ENCODE measurements at regions of chr4 and their contacts with region 1.

Region 1: DNA sequence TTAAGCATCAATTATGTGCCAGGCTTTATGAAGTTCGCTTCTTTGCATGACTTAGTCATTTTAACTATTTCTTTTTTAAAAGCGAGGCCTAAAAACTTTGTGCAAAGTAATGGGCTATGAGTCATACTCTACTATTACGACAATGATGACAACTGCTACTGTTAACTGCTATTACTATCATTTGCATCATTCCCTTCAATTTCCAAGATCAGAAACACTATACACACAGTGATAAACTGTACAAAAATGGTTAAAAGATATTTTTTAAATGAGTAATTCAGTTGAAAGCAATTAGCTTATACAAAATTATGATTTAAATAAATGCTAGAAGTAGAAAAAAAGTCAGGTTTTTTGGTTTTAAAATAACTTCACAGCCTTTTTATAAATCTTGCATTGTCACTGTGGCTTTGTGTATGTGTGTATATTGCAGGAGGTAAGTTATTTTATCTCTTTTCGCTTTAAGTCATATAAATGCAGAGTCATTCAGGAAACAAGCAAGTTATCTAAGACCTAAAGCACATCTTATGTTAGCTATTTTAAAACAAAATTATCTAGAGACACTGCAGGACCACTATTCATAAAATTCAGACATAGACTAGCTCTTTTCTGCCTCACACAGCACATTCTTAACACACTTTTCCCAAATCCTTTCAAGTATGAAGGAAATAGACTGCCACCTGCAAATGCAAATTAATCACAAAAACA is 18.5 kb upstream of the CXCL3 start:
- DNase-seq: peak; percentile 87
- ATAC-seq: peak; percentile 84
- H3K4me3 ChIP-seq: no peak overlapping the region
- H3K27ac ChIP-seq: peak overlapping the region; percentile 92
- H3K4me1 ChIP-seq: peaks cover 34% of the 10 kb centered on the region
- H3K27me3 ChIP-seq: no peaks in the 10 kb centered on the region
- CTCF ChIP-seq: no peak

Region 2: GRCh38 chr4:73859614-73860088 is 197.4 kb before region 1 on chr4:
- CTCF ChIA-PET with region 1: no interaction called
- POLR2A ChIA-PET with region 1: no interaction called
- intact Hi-C with region 1: no loop called
- DNase-seq: peak; percentile 36
- ATAC-seq: peak; percentile 21; the same call in 1 of the 2 replicates
- H3K4me3 ChIP-seq: no peak overlapping the region
- H3K27ac ChIP-seq: no peak overlapping the region
- H3K4me1 ChIP-seq: peaks cover 43% of the 10 kb centered on the region
- H3K27me3 ChIP-seq: no peaks in the 10 kb centered on the region
- CTCF ChIP-seq: no peak

Region 3: GRCh38 chr4:74072739-74073138 is 15.7 kb after region 1 on chr4:
- CTCF ChIA-PET with region 1: no interaction called
- POLR2A ChIA-PET with region 1: no interaction called
- intact Hi-C with region 1: no loop called
- DNase-seq: no peak
- ATAC-seq: no peak
- H3K4me3 ChIP-seq: no peak overlapping the region
- H3K27ac ChIP-seq: no peak overlapping the region
- H3K4me1 ChIP-seq: no peaks in the 10 kb centered on the region
- H3K27me3 ChIP-seq: no peaks in the 10 kb centered on the region
- CTCF ChIP-seq: no peak

Region 4: DNA sequence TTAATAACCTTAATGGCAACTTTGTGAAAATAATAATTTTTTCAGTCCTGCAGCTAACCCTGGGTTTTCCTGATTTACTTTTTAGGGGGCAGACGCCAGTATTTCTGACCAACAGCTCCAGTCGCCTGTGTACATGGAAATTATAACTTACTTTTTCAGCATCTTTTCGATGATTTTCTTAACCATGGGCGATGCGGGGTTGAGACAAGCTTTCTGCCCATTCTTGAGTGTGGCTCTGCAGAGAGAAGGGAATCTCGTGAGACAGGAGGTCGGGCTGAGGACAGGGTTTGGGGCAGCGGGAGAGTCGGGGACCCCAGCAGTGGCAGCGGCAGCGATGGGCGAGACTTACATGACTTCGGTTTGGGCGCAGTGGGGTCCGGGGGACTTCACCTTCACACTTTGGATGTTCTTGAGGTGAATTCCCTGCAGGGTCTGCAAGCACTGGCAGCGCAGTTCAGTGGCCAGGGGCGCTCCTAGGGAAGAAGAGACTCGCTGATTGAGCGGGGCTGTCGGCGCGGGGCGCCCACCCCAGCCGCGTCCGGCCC is 41.5 kb after region 1 on chr4:
- CTCF ChIA-PET with region 1: interaction called, 3 read pairs
- POLR2A ChIA-PET with region 1: interaction called, 3 read pairs
- intact Hi-C with region 1: loop called (anchors 2 kb)
- DNase-seq: no peak
- ATAC-seq: peak; percentile 5
- H3K4me3 ChIP-seq: peak overlapping the region; percentile 78
- H3K27ac ChIP-seq: peak overlapping the region; percentile 98
- H3K4me1 ChIP-seq: peaks cover 28% of the 10 kb centered on the region
- H3K27me3 ChIP-seq: no peaks in the 10 kb centered on the region
- CTCF ChIP-seq: no peak

Region 5: DNA sequence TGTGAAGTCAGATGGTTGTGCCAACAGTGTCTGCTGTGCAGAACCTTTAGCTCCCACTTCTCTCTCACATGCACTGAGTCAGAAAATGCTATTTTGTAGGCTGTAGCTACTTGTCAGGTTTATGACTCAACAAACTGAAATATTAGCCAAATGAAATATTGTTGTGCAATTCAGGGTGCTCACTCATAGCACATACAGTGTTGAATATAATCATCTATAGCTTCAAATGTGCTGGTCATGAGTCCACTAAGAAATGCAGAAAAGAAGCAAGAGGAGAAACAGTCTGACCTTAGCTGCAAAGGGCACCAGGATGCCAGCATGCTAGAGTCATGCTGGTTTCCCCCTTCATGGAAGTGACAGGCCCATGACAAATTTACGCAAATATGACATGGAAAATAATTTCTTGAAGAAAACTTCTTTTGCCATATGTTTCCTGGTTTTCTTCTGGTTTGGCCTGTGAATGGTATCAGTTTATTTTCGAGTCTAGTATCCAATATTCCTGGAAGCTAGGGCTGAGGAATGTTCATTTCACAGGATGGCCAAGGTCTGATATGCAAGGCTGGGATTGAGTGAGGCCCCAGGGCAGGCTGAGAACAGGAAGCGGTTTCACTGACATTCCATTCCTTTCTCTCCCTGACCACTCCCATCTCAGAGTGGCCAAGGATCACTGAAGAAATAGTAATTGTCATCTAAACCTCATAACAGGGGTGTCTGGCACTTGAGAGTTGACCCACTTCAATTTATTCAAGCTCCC is 52.3 kb after region 1 on chr4:
- CTCF ChIA-PET with region 1: no interaction called
- POLR2A ChIA-PET with region 1: interaction called, 3 read pairs
- intact Hi-C with region 1: loop called (anchors 5 kb)
- DNase-seq: peak; percentile 99
- ATAC-seq: peak; percentile 79
- H3K4me3 ChIP-seq: peak overlapping the region; percentile 45
- H3K27ac ChIP-seq: peak overlapping the region; percentile 96
- H3K4me1 ChIP-seq: peaks cover 65% of the 10 kb centered on the region
- H3K27me3 ChIP-seq: no peaks in the 10 kb centered on the region
- CTCF ChIP-seq: no peak

Region 6: GRCh38 chr4:74157561-74158465 is 100.8 kb after region 1 on chr4 and contains the start of gene MTHFD2L:
- CTCF ChIA-PET with region 1: no interaction called
- POLR2A ChIA-PET with region 1: no interaction called
- intact Hi-C with region 1: no loop called
- DNase-seq: peak; percentile 99
- ATAC-seq: peak; percentile 96
- H3K4me3 ChIP-seq: peak within 1 kb of the TSS; percentile 82
- H3K27ac ChIP-seq: peak within 1 kb of the TSS; percentile 84
- H3K4me1 ChIP-seq: peaks cover 27% of the 10 kb centered on the region
- H3K27me3 ChIP-seq: no peaks in the 10 kb centered on the region
- CTCF ChIP-seq: no peak
- total RNA-seq, gene MTHFD2L: 33.4 and 34.0 TPM in 2 replicates

Measured in PC-3 (cell line).